Dendritic cell treated with granulocyte-macrophage colony-stimulating factor and Interleukin-4, amounts not matched to agents 40 ng/mL and 50 ng/mL, for 4 days (primary cell): ENCODE measurements at regions of chr4 and their contacts with region 1.

Region 1: GRCh38 chr4:67327262-67328017 is 217.9 kb downstream of the CENPC start:
- H3K4me3 Mint-ChIP-seq: no peak overlapping the region
- H3K27ac Mint-ChIP-seq: no peak overlapping the region
- H3K4me1 Mint-ChIP-seq: no peaks in the 10 kb centered on the region
- H3K27me3 Mint-ChIP-seq: no peaks in the 10 kb centered on the region

Region 2: DNA sequence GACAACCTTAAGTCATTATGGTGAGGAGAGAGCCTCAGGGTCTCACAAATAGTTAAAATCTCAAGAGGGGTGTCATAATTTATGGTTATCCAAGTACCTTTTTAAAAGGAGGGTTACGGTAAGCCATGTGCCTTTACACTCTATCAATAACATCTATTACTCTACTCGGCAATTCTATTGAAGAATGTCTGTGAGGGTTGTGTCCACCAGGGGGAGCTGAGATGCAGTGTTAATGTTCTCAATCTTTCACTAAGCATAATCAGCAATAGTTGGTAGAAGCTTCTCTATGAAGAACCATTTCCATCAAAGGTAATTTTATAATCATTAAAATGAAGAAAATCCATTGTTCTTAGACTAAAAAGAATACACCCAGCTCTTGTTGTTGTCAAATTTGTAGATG is 239.5 kb before region 1 on chr4:
- intact Hi-C with region 1: loop called (anchors 1 kb)
- H3K4me3 Mint-ChIP-seq: no peak overlapping the region
- H3K27ac Mint-ChIP-seq: no peak overlapping the region
- H3K4me1 Mint-ChIP-seq: no peaks in the 10 kb centered on the region
- H3K27me3 Mint-ChIP-seq: no peaks in the 10 kb centered on the region

Region 3: GRCh38 chr4:67204441-67204840 is 123.0 kb before region 1 on chr4:
- intact Hi-C with region 1: no loop called
- H3K4me3 Mint-ChIP-seq: no peak overlapping the region
- H3K27ac Mint-ChIP-seq: no peak overlapping the region
- H3K4me1 Mint-ChIP-seq: no peaks in the 10 kb centered on the region
- H3K27me3 Mint-ChIP-seq: no peaks in the 10 kb centered on the region